G401 (cell line): ENCODE measurements at regions of chr14 and their contacts with region 1.

Region 1: GRCh38 chr14:70171726-70172125 is 17.0 kb downstream of the SLC8A3 start:
- DNase-seq: no peak

Region 2: DNA sequence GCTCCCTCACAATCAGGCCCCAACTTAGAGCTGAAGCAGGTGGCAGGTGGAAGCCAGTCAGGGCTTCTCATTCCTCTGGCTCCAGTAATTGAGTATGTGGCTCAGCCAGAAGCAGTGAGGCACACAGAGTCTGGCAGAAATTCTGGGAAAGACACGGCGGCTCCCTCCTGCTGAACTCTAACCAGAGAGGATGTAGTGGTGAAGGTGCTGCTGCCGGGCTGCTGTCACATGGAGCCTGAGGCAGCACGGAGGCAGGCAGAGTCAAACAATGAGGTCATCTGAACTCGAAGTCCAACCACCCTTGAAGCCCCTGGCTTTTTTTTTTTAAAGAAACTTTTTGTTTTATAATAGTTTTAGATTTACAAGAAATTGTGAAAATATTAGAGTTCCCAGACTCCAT is 325.9 kb before region 1 on chr14:
- in situ Hi-C with region 1: no loop called
- DNase-seq: peak; percentile 28

Region 3: DNA sequence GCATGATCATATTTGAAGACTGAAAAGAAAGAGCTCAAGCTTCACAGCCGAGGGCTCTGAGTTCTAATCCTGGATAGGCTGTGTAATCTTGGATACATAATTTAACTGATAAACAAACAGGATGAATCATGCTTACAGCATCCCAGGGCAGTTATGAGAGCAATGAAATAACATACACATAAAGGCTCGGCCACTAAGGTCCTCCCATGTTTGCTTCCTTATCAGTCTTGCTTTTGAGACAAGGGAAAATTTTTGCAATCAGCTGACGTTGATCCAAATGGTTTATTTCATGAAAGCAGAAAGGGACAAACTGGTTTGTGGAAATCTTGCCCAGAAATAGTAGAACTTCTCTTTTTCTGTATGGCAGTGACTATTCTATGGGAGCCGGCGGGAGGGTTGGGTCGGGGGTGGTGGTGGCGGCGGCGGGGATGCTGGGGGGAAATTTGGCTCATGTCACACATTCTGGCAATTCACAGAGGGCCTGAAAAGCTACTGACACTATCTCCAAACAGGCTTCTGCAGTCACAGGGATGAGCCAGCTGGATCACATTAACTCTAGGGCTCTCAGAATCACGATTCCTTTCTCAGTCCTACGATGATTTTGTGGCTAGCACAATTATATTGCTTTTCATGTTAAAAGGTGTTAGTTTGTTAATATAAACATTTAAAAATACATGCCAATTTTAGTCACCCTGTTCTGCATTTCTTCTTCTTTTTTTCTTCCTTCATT is 107.4 kb before region 1 on chr14:
- in situ Hi-C with region 1: no loop called
- DNase-seq: no peak

Region 4: GRCh38 chr14:70127186-70127585 is 44.5 kb before region 1 on chr14:
- in situ Hi-C with region 1: loop called (anchors 5 kb)
- DNase-seq: no peak